PC-3 (cell line): ENCODE measurements at regions of chr10 and their contacts with region 1.

Region 1: GRCh38 chr10:74262856-74263255 is 111.8 kb downstream of the ADK start:
- DNase-seq: no peak
- ATAC-seq: no peak
- H3K4me3 ChIP-seq: no peak overlapping the region
- H3K27ac ChIP-seq: no peak overlapping the region
- H3K4me1 ChIP-seq: peaks cover 12% of the 10 kb centered on the region
- H3K27me3 ChIP-seq: no peaks in the 10 kb centered on the region
- CTCF ChIP-seq: no peak

Region 2: GRCh38 chr10:74056036-74056818 is 206.6 kb before region 1 on chr10:
- CTCF ChIA-PET with region 1: no interaction called
- POLR2A ChIA-PET with region 1: no interaction called
- intact Hi-C with region 1: no loop called
- DNase-seq: peak; percentile 100
- ATAC-seq: peak; percentile 88
- H3K4me3 ChIP-seq: peak overlapping the region; percentile 29
- H3K27ac ChIP-seq: peak overlapping the region; percentile 71
- H3K4me1 ChIP-seq: peaks cover 65% of the 10 kb centered on the region
- H3K27me3 ChIP-seq: no peaks in the 10 kb centered on the region
- CTCF ChIP-seq: no peak

Region 3: GRCh38 chr10:74293686-74294371 is 31.0 kb after region 1 on chr10:
- CTCF ChIA-PET with region 1: no interaction called
- POLR2A ChIA-PET with region 1: no interaction called
- intact Hi-C with region 1: loop called (anchors 1 kb)
- DNase-seq: peak; percentile 100
- ATAC-seq: peak; percentile 80
- H3K4me3 ChIP-seq: peak overlapping the region; percentile 27
- H3K27ac ChIP-seq: peak overlapping the region; percentile 66
- H3K4me1 ChIP-seq: peaks cover 46% of the 10 kb centered on the region
- H3K27me3 ChIP-seq: no peaks in the 10 kb centered on the region
- CTCF ChIP-seq: no peak

Region 4: GRCh38 chr10:74305730-74306129 is 42.9 kb after region 1 on chr10:
- CTCF ChIA-PET with region 1: no interaction called
- POLR2A ChIA-PET with region 1: no interaction called
- intact Hi-C with region 1: no loop called
- DNase-seq: no peak
- ATAC-seq: no peak
- H3K4me3 ChIP-seq: no peak overlapping the region
- H3K27ac ChIP-seq: no peak overlapping the region
- H3K4me1 ChIP-seq: peaks cover 7% of the 10 kb centered on the region
- H3K27me3 ChIP-seq: no peaks in the 10 kb centered on the region
- CTCF ChIP-seq: no peak

Region 5: DNA sequence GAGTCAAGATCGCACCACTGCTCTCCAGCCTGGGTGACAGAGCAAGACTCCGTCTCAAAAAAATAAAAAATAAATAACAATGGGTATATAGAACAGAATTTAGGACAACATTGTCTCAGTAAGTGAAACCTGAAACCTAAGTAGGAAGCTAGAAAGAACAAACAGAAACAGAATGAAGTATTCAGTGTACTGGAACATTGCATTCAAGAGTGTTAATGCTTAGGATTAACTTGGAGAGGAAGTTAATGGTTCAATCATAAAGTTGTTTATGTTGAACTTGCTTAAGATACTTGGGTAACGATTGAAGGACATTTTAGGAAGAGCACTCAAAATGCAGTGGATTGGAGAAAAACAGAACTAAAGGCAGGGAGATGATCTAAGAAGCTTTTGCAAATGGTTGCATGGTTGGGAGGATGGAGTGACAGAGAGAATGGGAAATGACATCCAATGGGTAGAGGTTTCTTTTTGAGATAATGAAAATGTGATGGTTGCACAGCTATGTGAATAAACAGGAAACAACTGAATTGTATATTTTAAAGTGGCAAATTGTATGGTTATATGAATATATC is 121.8 kb after region 1 on chr10:
- CTCF ChIA-PET with region 1: no interaction called
- POLR2A ChIA-PET with region 1: no interaction called
- intact Hi-C with region 1: no loop called
- DNase-seq: no peak
- ATAC-seq: peak; percentile 71
- H3K4me3 ChIP-seq: no peak overlapping the region
- H3K27ac ChIP-seq: no peak overlapping the region
- H3K4me1 ChIP-seq: no peaks in the 10 kb centered on the region
- H3K27me3 ChIP-seq: no peaks in the 10 kb centered on the region
- CTCF ChIP-seq: no peak

Region 6: DNA sequence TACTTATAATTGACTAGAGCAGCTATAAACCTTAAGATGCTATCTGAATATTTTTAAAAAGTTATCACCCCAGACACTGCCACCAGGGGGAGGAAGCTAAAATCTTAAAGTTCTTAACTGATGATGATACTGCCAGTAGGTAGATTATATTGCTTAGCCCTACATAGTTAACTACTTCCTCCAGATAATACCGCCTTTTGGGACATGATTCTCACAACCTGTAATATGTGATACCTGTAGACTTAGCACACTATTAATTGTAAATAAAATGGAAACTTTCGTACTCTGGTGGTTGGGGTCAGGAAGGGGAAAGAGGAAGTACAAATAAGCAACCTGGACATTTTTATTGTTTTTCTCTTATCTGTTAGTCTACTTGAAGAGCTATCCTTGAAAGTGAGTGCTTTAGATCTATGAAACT is 157.1 kb after region 1 on chr10:
- CTCF ChIA-PET with region 1: no interaction called
- POLR2A ChIA-PET with region 1: no interaction called
- intact Hi-C with region 1: loop called (anchors 5 kb)
- DNase-seq: peak; percentile 92
- ATAC-seq: peak; percentile 70
- H3K4me3 ChIP-seq: no peak overlapping the region
- H3K27ac ChIP-seq: no peak overlapping the region
- H3K4me1 ChIP-seq: no peaks in the 10 kb centered on the region
- H3K27me3 ChIP-seq: no peaks in the 10 kb centered on the region
- CTCF ChIP-seq: peak; percentile 99

Region 7: DNA sequence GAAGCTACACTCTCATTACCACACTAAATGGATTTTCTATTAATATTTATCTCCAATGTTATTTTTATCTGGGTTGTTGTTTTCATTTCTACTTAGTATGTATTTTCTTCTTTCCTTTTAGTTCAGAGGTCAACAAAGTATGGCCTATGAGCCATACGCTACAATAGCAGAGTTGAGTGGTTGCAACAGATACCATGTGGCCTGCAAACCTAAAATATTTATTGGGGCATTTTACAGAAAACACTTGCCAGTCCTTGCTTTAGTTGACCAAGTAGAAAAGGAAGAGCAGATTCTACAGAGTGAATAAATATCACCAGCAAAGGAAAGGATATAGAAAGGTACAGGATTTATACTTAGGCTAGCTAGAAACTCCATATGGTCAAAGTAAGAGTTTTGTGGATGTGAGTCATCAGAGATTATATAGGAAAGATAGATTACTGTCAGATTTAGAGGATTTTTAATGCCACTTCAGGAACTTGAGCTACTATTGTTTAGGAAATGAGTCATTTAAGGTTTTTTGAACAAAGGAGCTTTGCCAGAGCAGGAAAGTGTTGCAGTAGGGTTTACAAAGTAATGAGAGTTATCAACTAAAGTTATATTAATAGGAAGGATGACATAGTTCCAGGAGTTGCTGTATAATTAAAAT is 240.2 kb after region 1 on chr10:
- CTCF ChIA-PET with region 1: no interaction called
- POLR2A ChIA-PET with region 1: no interaction called
- intact Hi-C with region 1: loop called (anchors 1 kb)
- DNase-seq: peak; percentile 100
- ATAC-seq: peak; percentile 88
- H3K4me3 ChIP-seq: 0 out of 2 replicates have a peak overlapping the region, but pooled peaks have one; percentile 1
- H3K27ac ChIP-seq: peak overlapping the region; percentile 69
- H3K4me1 ChIP-seq: peaks cover 44% of the 10 kb centered on the region
- H3K27me3 ChIP-seq: no peaks in the 10 kb centered on the region
- CTCF ChIP-seq: no peak

Region 8: DNA sequence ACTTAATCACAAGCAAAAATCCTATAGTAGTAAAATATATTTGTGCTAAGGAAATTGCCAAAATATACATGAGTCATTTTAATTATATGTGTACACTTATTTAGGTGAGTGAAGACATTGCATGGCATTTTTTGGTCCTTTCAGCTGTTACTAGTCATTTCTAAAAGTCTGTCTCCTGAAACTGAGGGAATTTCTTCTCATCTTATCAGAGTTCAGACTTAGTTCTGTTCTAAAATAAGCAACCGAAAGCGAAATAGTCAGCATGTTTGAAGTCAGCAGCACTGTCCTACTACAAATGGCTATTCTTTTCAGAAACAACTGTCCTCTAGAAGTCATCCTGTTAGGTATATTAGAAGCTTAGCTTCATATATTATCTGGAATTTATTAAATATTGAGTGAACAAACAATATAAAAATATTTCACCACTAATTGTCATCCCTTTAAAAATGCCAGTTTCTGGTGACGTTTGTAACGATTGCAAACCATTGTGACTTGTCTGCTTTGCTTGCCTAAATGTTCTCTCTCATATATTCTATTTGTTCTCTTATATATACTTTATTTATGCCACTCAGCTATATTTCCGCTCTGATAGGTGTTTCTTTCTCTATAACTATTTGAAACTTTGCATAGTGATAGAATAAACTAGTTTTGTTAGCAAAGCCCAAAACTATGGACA is 336.2 kb after region 1 on chr10:
- CTCF ChIA-PET with region 1: no interaction called
- POLR2A ChIA-PET with region 1: no interaction called
- intact Hi-C with region 1: loop called (anchors 1 kb)
- DNase-seq: peak; percentile 74
- ATAC-seq: peak; percentile 89
- H3K4me3 ChIP-seq: no peak overlapping the region
- H3K27ac ChIP-seq: no peak overlapping the region
- H3K4me1 ChIP-seq: peaks cover 12% of the 10 kb centered on the region
- H3K27me3 ChIP-seq: no peaks in the 10 kb centered on the region
- CTCF ChIP-seq: no peak

Region 9: DNA sequence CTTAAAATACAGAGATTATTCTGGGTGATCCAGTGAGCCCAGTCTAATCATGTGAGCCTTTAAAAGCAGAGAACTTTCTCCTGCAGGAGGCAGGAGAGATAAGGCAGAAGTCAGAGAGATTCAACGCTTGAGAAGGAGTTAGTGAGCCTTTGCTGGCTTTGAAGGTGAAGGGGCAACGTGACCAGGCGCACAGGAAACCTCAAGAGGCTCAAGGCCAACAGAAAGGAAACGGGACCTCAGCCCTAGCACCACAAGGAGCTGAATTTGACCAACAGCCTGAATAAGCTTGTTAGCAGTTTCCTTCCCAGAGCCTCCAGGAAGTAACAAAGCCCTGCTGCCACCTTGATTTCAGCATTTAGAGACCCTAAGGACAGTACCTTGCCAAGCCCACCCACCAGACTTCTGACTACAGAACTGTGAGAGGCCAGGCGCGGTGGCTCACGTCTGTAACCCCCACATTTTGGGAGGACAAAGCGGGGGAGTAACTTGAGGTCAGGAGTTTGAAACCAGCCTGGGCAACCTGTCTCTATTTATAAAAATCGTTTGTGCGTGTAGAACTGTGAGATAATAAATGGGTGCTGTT is 476.2 kb after region 1 on chr10:
- CTCF ChIA-PET with region 1: no interaction called
- POLR2A ChIA-PET with region 1: no interaction called
- intact Hi-C with region 1: loop called (anchors 5 kb)
- DNase-seq: peak; percentile 71
- ATAC-seq: peak; percentile 64
- H3K4me3 ChIP-seq: no peak overlapping the region
- H3K27ac ChIP-seq: no peak overlapping the region
- H3K4me1 ChIP-seq: peaks cover 10% of the 10 kb centered on the region
- H3K27me3 ChIP-seq: no peaks in the 10 kb centered on the region
- CTCF ChIP-seq: peak; percentile 85

Region 10: GRCh38 chr10:74875952-74876351 is 613.1 kb after region 1 on chr10:
- CTCF ChIA-PET with region 1: no interaction called
- POLR2A ChIA-PET with region 1: no interaction called
- intact Hi-C with region 1: loop called (anchors 1 kb)
- DNase-seq: peak; percentile 99
- ATAC-seq: peak; percentile 92
- H3K4me3 ChIP-seq: peak overlapping the region; percentile 1; the same call in 1 of the 2 replicates
- H3K27ac ChIP-seq: peak overlapping the region; percentile 67
- H3K4me1 ChIP-seq: peaks cover 56% of the 10 kb centered on the region
- H3K27me3 ChIP-seq: no peaks in the 10 kb centered on the region
- CTCF ChIP-seq: no peak